ENCODE measurements at regions of chr7 and their contacts with region 1.

Region 1: GRCh38 chr7:158311791-158312190 is 275.8 kb downstream of the PTPRN2 start:
- DNase-seq: no peak
- H3K4me3 ChIP-seq: no peak overlapping the region
- H3K27ac ChIP-seq: no peak overlapping the region
- H3K4me1 ChIP-seq: no peaks in the 10 kb centered on the region
- H3K27me3 ChIP-seq: no peaks in the 10 kb centered on the region
- CTCF ChIP-seq: no peak
- POLR2A ChIP-seq: no peak

Region 2: GRCh38 chr7:158286210-158286609 is 25.6 kb before region 1 on chr7:
- intact Hi-C with region 1: loop called (anchors 2 kb)
- DNase-seq: no peak
- H3K4me3 ChIP-seq: no peak overlapping the region
- H3K27ac ChIP-seq: no peak overlapping the region
- H3K4me1 ChIP-seq: no peaks in the 10 kb centered on the region
- H3K27me3 ChIP-seq: no peaks in the 10 kb centered on the region
- CTCF ChIP-seq: no peak
- POLR2A ChIP-seq: no peak

Region 3: DNA sequence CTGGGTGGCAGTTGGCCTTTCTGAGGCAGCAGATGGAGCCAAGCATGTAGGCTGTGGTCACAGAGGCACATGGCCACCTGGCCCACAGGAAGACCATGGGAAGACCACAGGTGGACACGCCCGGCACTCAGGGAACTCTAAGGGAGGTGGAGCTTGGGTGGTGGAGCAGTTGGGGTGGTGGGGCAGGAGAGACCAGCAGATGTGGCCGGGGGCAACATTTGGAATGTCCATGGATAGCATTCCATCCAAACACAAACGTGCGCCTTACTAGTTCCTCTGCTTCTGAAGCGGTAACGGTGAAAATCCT is 15.0 kb before region 1 on chr7:
- intact Hi-C with region 1: no loop called
- DNase-seq: no peak
- H3K4me3 ChIP-seq: no peak overlapping the region
- H3K27ac ChIP-seq: no peak overlapping the region
- H3K4me1 ChIP-seq: no peaks in the 10 kb centered on the region
- H3K27me3 ChIP-seq: no peaks in the 10 kb centered on the region
- CTCF ChIP-seq: no peak
- POLR2A ChIP-seq: no peak

Region 4: GRCh38 chr7:158782761-158783401 is 471.1 kb after region 1 on chr7:
- intact Hi-C with region 1: no loop called
- DNase-seq: no peak
- H3K4me3 ChIP-seq: no peak overlapping the region
- H3K27ac ChIP-seq: peak overlapping the region; percentile 52 to 64
- H3K4me1 ChIP-seq: no peaks in the 10 kb centered on the region
- H3K27me3 ChIP-seq: no peaks in the 10 kb centered on the region
- CTCF ChIP-seq: peak in 2 of 3 donors; percentile 22 to 30
- POLR2A ChIP-seq: no peak

Region 5: DNA sequence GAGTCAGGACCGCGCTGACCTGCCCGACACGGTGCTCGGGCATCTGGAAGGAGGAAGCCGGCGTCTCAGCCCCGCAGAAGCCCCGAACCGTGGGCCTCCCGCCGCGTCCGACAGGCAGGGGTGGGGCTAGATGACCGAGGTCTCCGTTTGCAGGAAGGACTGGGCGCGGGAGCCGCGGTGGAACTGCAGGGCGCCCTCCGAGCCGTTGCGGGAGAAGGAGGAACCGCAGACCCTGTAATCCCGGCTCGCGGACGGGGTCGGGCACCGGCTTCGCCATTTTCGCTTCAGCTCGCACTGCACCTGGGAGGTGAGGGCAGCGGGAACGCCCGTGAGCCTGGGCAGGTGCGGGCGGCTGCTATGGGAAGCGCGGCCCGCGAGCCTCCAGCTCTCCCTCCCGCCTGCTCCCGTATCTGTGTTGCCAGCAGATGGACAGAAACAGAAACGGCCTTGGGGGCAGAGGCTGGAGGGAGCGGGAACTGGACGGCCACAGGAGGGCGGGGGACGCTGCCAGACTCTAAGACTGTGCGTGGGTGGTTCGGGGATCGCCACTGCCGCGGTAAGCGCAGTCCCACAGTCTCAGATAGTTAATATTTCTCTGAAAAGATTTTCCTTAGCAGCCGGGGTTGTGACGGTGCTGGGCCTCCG is 718.8 kb after region 1 on chr7:
- intact Hi-C with region 1: no loop called
- DNase-seq: peak; percentile 40 to 61
- H3K4me3 ChIP-seq: peak overlapping the region; percentile 44 to 87 (median 61)
- H3K27ac ChIP-seq: peak overlapping the region; percentile 69 to 83
- H3K4me1 ChIP-seq: no peaks in the 10 kb centered on the region
- H3K27me3 ChIP-seq: no peaks in the 10 kb centered on the region
- CTCF ChIP-seq: peak in 2 of 3 donors; percentile 28 to 50
- POLR2A ChIP-seq: no peak